Activated CD8-positive, alpha-beta T cell treated with anti-CD3 and anti-CD28 coated beads for 36 hours (primary cell): ENCODE measurements at regions of chr4 and their contacts with region 1.

Region 1: DNA sequence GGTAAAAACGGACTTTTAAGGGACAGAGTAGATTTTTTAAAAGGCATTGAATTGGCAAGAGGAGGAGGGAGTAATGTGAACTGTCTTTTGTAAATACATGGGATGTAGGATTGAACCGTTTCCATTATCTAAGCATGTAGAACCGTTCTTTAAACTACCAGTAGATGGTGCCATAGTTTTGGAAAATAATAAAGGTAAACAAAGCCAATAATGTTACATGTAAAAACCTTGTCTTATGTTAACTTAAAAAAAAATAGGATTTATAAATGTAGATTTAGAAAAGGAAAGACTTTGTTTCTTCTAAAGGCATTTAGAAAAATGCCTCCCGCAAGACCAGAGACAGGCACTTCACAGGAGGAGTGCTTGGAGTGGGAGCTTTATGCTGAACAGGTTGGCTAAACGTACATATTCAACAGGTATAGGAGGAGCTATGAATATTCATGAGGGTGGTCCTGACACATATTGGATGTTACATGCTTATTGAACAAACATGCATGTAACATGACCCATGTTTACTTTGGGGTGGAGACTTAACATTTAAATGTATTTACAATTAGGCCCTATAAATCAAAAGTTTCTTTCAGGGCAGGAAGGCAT is 45.5 kb upstream of the FAM241A start:
- DNase-seq: no peak
- ATAC-seq: peak; percentile 58
- H3K4me3 Mint-ChIP-seq: no peak overlapping the region
- H3K27ac Mint-ChIP-seq: no peak overlapping the region
- H3K4me1 Mint-ChIP-seq: peaks cover 3% of the 10 kb centered on the region
- H3K27me3 Mint-ChIP-seq: peaks cover 6% of the 10 kb centered on the region
- CTCF ChIP-seq: peak; percentile 72

Region 2: GRCh38 chr4:111960241-111960667 is 139.5 kb before region 1 on chr4:
- CTCF ChIA-PET with region 1: no interaction called
- POLR2A ChIA-PET with region 1: no interaction called
- intact Hi-C with region 1: no loop called
- DNase-seq: no peak
- ATAC-seq: no peak
- H3K4me3 Mint-ChIP-seq: no peak overlapping the region
- H3K27ac Mint-ChIP-seq: no peak overlapping the region
- H3K4me1 Mint-ChIP-seq: no peaks in the 10 kb centered on the region
- H3K27me3 Mint-ChIP-seq: no peaks in the 10 kb centered on the region
- CTCF ChIP-seq: no peak

Region 3: DNA sequence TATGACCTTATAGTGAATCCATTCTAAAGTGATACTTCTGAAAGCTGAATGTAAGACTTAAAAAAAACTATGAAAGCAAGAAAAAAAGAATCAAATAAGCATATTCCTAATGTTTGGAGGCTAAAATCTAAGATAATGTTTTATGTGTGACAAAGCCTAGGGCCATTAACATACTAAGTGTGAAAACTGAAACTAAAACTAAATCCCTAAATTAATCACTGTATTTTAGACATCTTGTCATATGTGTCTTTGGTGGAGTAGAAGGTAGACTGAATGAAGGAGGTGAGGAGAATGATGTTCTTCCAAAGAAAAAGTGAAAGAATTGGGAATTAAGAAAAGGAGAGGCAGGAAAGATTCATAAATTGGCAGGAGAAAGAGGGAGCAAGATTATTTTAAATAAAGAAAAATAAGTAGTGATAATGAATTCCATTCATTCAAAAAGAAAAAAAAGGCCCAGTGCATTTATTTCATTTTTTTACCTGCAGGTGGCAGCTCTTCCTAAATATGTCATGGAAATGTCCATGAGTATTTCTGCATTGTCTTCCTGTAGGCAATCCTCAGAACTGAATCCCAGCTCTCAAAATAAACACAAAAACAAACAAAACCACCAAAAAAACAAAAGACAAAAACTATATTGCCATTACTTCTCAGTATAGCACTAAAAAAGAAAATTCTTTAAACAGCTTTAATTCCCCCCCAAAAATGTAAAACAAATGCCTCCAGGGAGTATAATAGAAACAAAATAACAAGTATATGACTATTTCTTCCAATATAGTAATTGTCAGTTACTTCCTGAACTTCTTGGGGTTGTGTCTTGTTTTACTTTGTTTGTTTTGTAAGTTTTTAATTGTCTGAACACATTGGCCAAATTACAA is 114.8 kb after region 1 on chr4:
- CTCF ChIA-PET with region 1: interaction called, 11 read pairs
- POLR2A ChIA-PET with region 1: no interaction called
- intact Hi-C with region 1: no loop called
- DNase-seq: no peak
- ATAC-seq: peak; percentile 75
- H3K4me3 Mint-ChIP-seq: no peak overlapping the region
- H3K27ac Mint-ChIP-seq: no peak overlapping the region
- H3K4me1 Mint-ChIP-seq: peaks cover 9% of the 10 kb centered on the region
- H3K27me3 Mint-ChIP-seq: no peaks in the 10 kb centered on the region
- CTCF ChIP-seq: peak; percentile 63

Region 4: GRCh38 chr4:112238833-112239232 is 139.0 kb after region 1 on chr4:
- CTCF ChIA-PET with region 1: interaction called, 110 read pairs
- POLR2A ChIA-PET with region 1: no interaction called
- intact Hi-C with region 1: loop called (anchors 1 kb)
- DNase-seq: no peak
- ATAC-seq: peak; percentile 58
- H3K4me3 Mint-ChIP-seq: no peak overlapping the region
- H3K27ac Mint-ChIP-seq: no peak overlapping the region
- H3K4me1 Mint-ChIP-seq: peaks cover 37% of the 10 kb centered on the region
- H3K27me3 Mint-ChIP-seq: no peaks in the 10 kb centered on the region
- CTCF ChIP-seq: no peak

Region 5: DNA sequence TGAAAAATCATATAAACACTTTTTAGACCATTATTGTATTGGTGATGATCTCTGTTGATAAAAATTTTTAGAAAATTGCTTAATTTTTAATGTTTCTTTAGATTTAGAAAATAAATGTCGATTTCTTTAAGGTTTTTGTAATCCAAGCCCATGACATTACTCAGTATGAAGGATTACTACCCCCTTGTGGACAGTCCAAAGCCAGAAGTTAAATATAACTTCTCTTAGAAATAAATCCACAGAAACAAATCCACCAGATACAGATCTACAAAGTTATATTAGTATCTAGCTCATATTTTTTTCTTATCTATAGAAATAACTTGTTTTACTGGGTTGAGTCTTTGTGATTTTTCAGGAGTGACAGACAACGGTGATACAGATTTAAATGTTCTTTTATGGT is 167.0 kb after region 1 on chr4:
- CTCF ChIA-PET with region 1: interaction called, 16 read pairs
- POLR2A ChIA-PET with region 1: no interaction called
- intact Hi-C with region 1: no loop called
- DNase-seq: no peak
- ATAC-seq: no peak
- H3K4me3 Mint-ChIP-seq: no peak overlapping the region
- H3K27ac Mint-ChIP-seq: no peak overlapping the region
- H3K4me1 Mint-ChIP-seq: peaks cover 24% of the 10 kb centered on the region
- H3K27me3 Mint-ChIP-seq: no peaks in the 10 kb centered on the region
- CTCF ChIP-seq: peak; percentile 41

Region 6: GRCh38 chr4:112515304-112516067 is 415.7 kb after region 1 on chr4:
- CTCF ChIA-PET with region 1: interaction called, 16 read pairs
- POLR2A ChIA-PET with region 1: no interaction called
- intact Hi-C with region 1: loop called (anchors 5 kb)
- DNase-seq: peak; percentile 68
- ATAC-seq: peak; percentile 75
- H3K4me3 Mint-ChIP-seq: peak overlapping the region; percentile 96
- H3K27ac Mint-ChIP-seq: peak overlapping the region; percentile 62
- H3K4me1 Mint-ChIP-seq: peaks cover 46% of the 10 kb centered on the region
- H3K27me3 Mint-ChIP-seq: peaks cover 83% of the 10 kb centered on the region
- CTCF ChIP-seq: no peak